CD8-positive, alpha-beta T cell (primary cell): ENCODE measurements at regions of chr12 and their contacts with region 1.

Region 1: GRCh38 chr12:120292661-120293531 is at the start of gene RNU4-1:
- DNase-seq: peak; percentile 53 to 91 (median 75)
- ATAC-seq: peak; percentile 56
- H3K4me3 ChIP-seq: peak within 1 kb of the TSS; percentile 69 to 72
- H3K4me3 Mint-ChIP-seq: no peak within 1 kb of the TSS
- H3K27ac ChIP-seq: peak within 1 kb of the TSS; percentile 99
- H3K27ac Mint-ChIP-seq: no peak within 1 kb of the TSS
- H3K4me1 ChIP-seq: peaks cover 14% of the 10 kb centered on the region
- H3K4me1 Mint-ChIP-seq: peaks cover 8% of the 10 kb centered on the region
- H3K27me3 ChIP-seq: no peaks in the 10 kb centered on the region
- H3K27me3 Mint-ChIP-seq: no peaks in the 10 kb centered on the region
- CTCF ChIP-seq: no peak
- total RNA-seq, gene RNU4-1: 1,572 to 1,612 TPM

Region 2: DNA sequence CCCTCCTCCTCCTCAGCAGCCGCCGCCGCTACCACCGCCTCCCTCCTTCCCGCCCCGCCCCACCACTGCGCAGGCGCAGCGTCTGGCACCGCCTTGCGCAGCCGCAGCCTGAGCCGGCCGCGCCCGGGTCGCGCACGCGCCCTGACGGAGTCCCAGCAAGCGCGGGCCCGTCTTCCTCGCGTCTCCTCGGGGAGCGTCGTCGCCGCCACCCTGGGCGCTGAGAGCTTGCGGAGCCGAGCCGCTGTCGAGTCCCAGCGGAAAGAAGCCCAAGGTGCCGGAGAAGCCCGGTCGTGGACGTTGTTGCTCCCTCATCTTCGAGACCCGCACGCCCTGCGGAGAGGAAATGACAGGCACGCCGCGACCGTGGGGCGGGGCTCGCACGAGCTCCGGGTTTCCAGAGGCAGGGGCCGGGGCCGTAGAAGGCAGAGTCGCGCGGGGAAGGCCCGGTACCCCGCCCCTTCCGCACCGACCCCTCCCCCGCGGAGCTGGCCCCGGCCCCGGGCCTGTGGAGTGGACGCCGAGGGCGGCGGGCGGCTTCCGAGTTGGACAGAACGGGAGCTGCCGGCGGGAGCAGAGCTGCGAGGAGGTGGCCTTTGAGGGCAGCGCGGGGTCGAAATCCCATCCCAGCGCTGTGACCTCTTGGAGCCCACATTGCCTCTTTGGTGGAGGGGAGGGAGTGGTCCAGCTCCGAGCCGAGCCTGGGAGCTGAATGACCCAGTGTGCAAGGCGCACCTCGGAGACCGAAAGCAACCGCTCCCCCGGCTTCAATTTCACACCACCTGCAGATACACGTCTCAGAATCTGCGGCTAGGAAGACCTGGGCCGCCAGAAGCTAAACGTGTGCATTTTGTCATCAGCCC is 175.9 kb before region 1 on chr12:
- CTCF ChIA-PET with region 1: no interaction called
- POLR2A ChIA-PET with region 1: interaction called, 26 read pairs
- intact Hi-C with region 1: no loop called
- DNase-seq: peak; percentile 95 to 99 (median 97)
- ATAC-seq: peak; percentile 84
- H3K4me3 ChIP-seq: peak overlapping the region; percentile 87 to 90
- H3K4me3 Mint-ChIP-seq: peak overlapping the region; percentile 84
- H3K27ac ChIP-seq: peak overlapping the region; percentile 91 to 95
- H3K27ac Mint-ChIP-seq: peak overlapping the region; percentile 88
- H3K4me1 ChIP-seq: peaks cover 53% of the 10 kb centered on the region
- H3K4me1 Mint-ChIP-seq: peaks cover 73% of the 10 kb centered on the region
- H3K27me3 ChIP-seq: no peaks in the 10 kb centered on the region
- H3K27me3 Mint-ChIP-seq: no peaks in the 10 kb centered on the region
- CTCF ChIP-seq: no peak

Region 3: GRCh38 chr12:120216742-120217605 is 75.9 kb before region 1 on chr12:
- CTCF ChIA-PET with region 1: no interaction called
- POLR2A ChIA-PET with region 1: interaction called, 14 read pairs
- intact Hi-C with region 1: no loop called
- DNase-seq: no peak
- ATAC-seq: no peak
- H3K4me3 ChIP-seq: no peak overlapping the region
- H3K4me3 Mint-ChIP-seq: no peak overlapping the region
- H3K27ac ChIP-seq: no peak overlapping the region
- H3K27ac Mint-ChIP-seq: no peak overlapping the region
- H3K4me1 ChIP-seq: no peaks in the 10 kb centered on the region
- H3K4me1 Mint-ChIP-seq: no peaks in the 10 kb centered on the region
- H3K27me3 ChIP-seq: no peaks in the 10 kb centered on the region
- H3K27me3 Mint-ChIP-seq: no peaks in the 10 kb centered on the region
- CTCF ChIP-seq: no peak

Region 4: GRCh38 chr12:120257041-120257821 is 35.7 kb before region 1 on chr12:
- CTCF ChIA-PET with region 1: interaction called, 34 read pairs
- POLR2A ChIA-PET with region 1: interaction called, 81 read pairs
- intact Hi-C with region 1: loop called (anchors 1 to 2 kb)
- DNase-seq: no peak
- ATAC-seq: no peak
- H3K4me3 ChIP-seq: no peak overlapping the region
- H3K4me3 Mint-ChIP-seq: no peak overlapping the region
- H3K27ac ChIP-seq: peak overlapping the region in 1 of 2 experiments; percentile 23
- H3K27ac Mint-ChIP-seq: peak overlapping the region; percentile 83
- H3K4me1 ChIP-seq: peaks cover 89% of the 10 kb centered on the region
- H3K4me1 Mint-ChIP-seq: peaks cover 88% of the 10 kb centered on the region
- H3K27me3 ChIP-seq: no peaks in the 10 kb centered on the region
- H3K27me3 Mint-ChIP-seq: no peaks in the 10 kb centered on the region
- CTCF ChIP-seq: no peak

Region 5: DNA sequence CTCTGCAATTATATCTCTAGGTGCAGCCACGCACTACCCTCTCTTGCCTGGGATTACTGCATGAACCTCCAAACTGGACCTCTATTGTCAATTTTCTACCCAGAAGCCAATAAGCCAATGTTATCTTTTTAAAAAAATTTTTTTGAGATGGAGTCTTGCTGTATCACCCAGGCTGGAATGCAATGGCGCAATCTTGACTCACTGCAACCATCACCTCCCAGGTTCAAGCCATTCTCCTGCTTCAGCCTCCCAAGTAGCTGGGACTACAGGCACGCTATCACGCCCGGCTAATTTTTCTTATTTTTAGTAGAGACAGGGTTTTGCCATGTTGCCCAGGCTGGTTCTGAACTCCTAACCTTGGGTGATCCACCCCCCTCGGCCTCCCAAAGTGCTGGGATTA is 16.2 kb before region 1 on chr12:
- CTCF ChIA-PET with region 1: no interaction called
- POLR2A ChIA-PET with region 1: interaction called, 16 read pairs
- intact Hi-C with region 1: no loop called
- DNase-seq: no peak
- ATAC-seq: no peak
- H3K4me3 ChIP-seq: no peak overlapping the region
- H3K4me3 Mint-ChIP-seq: no peak overlapping the region
- H3K27ac ChIP-seq: no peak overlapping the region
- H3K27ac Mint-ChIP-seq: no peak overlapping the region
- H3K4me1 ChIP-seq: no peaks in the 10 kb centered on the region
- H3K4me1 Mint-ChIP-seq: no peaks in the 10 kb centered on the region
- H3K27me3 ChIP-seq: no peaks in the 10 kb centered on the region
- H3K27me3 Mint-ChIP-seq: no peaks in the 10 kb centered on the region
- CTCF ChIP-seq: no peak

Region 6: GRCh38 chr12:120421701-120422100 is 128.8 kb after region 1 on chr12:
- CTCF ChIA-PET with region 1: no interaction called
- POLR2A ChIA-PET with region 1: no interaction called
- intact Hi-C with region 1: no loop called
- DNase-seq: no peak
- ATAC-seq: no peak
- H3K4me3 ChIP-seq: no peak overlapping the region
- H3K4me3 Mint-ChIP-seq: no peak overlapping the region
- H3K27ac ChIP-seq: no peak overlapping the region
- H3K27ac Mint-ChIP-seq: no peak overlapping the region
- H3K4me1 ChIP-seq: no peaks in the 10 kb centered on the region
- H3K4me1 Mint-ChIP-seq: no peaks in the 10 kb centered on the region
- H3K27me3 ChIP-seq: no peaks in the 10 kb centered on the region
- H3K27me3 Mint-ChIP-seq: no peaks in the 10 kb centered on the region
- CTCF ChIP-seq: no peak